Posterior cingulate gyrus (tissue), 11 donors: ENCODE measurements at regions of chr4 and their contacts with region 1.

Region 1: GRCh38 chr4:109803924-109804571 is 2.2 kb upstream of the CFI start:
- DNase-seq: no peak

Region 2: DNA sequence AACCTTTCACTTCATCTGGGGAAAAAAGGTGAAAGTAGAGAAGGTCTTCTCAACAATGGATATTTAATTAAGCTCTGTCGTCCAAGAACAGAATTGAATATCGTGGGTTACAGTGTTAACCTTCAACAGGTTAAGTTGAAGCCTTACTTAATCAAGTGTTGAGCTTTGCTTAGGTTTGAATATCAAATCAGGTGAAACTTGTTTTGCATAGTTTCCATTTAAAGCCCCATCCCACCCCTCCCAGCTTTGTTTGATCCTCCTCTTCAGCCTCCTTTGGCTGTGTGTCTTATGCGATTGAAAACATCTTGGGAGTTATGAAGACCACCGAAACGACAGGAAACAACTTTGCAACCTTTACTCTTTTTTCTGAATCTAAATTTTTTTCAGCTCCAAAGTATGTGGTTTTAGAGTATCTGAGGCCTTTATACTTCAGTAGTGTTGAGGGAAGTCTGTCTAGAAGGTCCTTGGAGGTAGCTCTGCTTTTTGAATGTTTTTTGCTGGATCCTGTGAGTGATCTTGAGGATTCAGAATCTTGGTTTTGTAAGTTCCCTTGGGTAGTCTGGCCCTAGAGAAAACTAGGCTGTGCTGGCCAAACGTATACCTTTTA is 204.9 kb before region 1 on chr4:
- intact Hi-C with region 1: no loop called
- DNase-seq: no peak

Region 3: GRCh38 chr4:109702950-109703663 is 100.9 kb before region 1 on chr4 and contains the start of gene CASP6:
- intact Hi-C with region 1: loop called (anchors 10 kb)
- DNase-seq: peak; percentile 57 to 96 (median 74)